ENCODE measurements at regions of chr1 and their contacts with region 1.

Region 1: GRCh38 chr1:178093205-178093957 is 523 bp upstream of the RASAL2 start:
- H3K4me3 Mint-ChIP-seq: peak overlapping the region; percentile 85
- H3K27ac Mint-ChIP-seq: peak overlapping the region; percentile 86
- H3K4me1 Mint-ChIP-seq: peaks cover 60% of the 10 kb centered on the region
- H3K27me3 Mint-ChIP-seq: no peaks in the 10 kb centered on the region

Region 2: DNA sequence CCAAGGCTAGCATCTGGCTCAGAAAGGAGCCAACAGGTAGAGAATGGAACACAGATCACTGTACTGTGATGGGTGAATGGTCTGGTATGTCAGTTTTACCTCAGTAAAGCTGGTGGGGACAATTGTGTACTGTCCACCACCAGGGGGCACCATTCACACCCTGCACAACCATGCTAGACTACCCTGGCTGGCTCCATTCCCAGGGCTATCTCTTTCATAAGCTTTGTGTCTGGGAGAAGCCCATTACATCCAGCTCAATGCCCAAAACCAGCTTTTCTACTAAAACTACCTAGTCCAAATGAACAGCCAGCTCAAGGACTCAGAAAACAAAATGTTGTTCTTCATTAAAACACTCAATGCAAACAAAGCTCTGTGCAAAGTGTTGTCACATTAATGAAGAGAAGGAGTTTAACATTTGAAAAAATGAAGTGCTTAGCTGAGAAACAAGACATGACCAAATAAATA is 61.5 kb before region 1 on chr1:
- intact Hi-C with region 1: loop called (anchors 5 kb)
- H3K4me3 Mint-ChIP-seq: no peak overlapping the region
- H3K27ac Mint-ChIP-seq: no peak overlapping the region
- H3K4me1 Mint-ChIP-seq: peaks cover 7% of the 10 kb centered on the region
- H3K27me3 Mint-ChIP-seq: no peaks in the 10 kb centered on the region

Region 3: GRCh38 chr1:178055779-178056471 is 37.5 kb before region 1 on chr1:
- intact Hi-C with region 1: loop called (anchors 2 kb)
- H3K4me3 Mint-ChIP-seq: peak overlapping the region; percentile 43
- H3K27ac Mint-ChIP-seq: peak overlapping the region; percentile 85
- H3K4me1 Mint-ChIP-seq: peaks cover 67% of the 10 kb centered on the region
- H3K27me3 Mint-ChIP-seq: peaks cover 2% of the 10 kb centered on the region

Region 4: DNA sequence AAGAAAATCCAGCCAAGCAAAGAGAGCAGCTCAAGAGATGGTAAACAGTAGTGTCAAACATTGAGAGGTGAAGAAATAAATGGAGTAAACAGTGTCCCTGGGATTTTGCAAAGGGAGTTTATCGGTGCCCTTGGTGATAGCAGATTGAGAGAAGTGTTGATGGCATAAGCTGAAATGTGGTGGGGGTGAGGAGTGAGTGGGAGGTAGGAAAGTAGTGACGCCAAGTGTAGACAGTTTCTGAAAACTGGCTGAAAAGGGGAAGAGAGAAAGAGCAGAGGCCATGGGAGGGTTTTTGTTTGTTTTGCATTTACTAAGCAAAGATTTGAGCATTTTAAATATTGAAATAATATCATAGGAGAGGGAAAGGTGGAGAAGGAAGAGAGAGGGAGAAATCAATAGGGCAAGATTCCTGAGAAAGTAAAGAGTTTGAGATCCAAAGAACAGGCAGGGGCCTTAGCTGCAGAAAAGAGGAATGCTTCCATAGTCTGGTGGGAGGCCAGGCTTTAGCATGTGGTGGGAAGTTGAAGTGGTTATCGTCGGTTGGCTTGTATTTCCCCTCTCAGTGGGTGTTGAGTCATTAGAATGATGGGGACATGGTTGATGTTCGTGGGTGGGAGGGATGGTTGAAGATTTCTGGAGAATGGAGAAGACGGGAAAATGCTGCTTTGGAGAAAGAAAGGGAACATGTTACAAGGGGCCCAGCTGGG is 26.3 kb before region 1 on chr1:
- intact Hi-C with region 1: loop called (anchors 1 kb)
- H3K4me3 Mint-ChIP-seq: peak overlapping the region; percentile 1
- H3K27ac Mint-ChIP-seq: peak overlapping the region; percentile 97
- H3K4me1 Mint-ChIP-seq: peaks cover 55% of the 10 kb centered on the region
- H3K27me3 Mint-ChIP-seq: no peaks in the 10 kb centered on the region

Region 5: GRCh38 chr1:178134061-178134460 is 40.7 kb after region 1 on chr1:
- intact Hi-C with region 1: loop called (anchors 5 kb)
- H3K4me3 Mint-ChIP-seq: no peak overlapping the region
- H3K27ac Mint-ChIP-seq: peak overlapping the region; percentile 80
- H3K4me1 Mint-ChIP-seq: peaks cover 40% of the 10 kb centered on the region
- H3K27me3 Mint-ChIP-seq: no peaks in the 10 kb centered on the region

Region 6: GRCh38 chr1:178189814-178190213 is 96.4 kb after region 1 on chr1:
- intact Hi-C with region 1: loop called (anchors 5 kb)
- H3K4me3 Mint-ChIP-seq: no peak overlapping the region
- H3K27ac Mint-ChIP-seq: no peak overlapping the region
- H3K4me1 Mint-ChIP-seq: peaks cover 54% of the 10 kb centered on the region
- H3K27me3 Mint-ChIP-seq: no peaks in the 10 kb centered on the region

Region 7: DNA sequence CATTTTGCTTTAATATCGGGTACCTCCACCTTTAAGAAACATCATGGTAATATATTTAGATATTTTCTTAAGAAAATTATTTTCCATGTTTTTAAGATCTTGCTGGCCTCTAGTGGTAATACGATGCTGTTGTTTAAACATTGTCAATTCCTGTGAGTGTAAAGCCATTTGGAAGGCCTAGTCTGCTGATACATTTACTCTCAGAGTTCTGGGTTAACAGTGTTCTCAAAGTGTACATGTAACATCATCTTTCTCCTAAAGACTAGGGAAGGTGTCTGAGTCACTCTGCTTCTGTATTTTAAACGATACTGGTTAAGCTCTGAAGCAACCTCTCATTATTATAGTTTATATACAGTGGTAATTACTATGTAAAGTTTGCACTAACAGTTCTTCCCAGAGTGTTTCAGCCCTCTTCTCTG is 189.6 kb after region 1 on chr1:
- intact Hi-C with region 1: loop called (anchors 5 kb)
- H3K4me3 Mint-ChIP-seq: no peak overlapping the region
- H3K27ac Mint-ChIP-seq: no peak overlapping the region
- H3K4me1 Mint-ChIP-seq: peaks cover 46% of the 10 kb centered on the region
- H3K27me3 Mint-ChIP-seq: no peaks in the 10 kb centered on the region

Measured in dendritic cell treated with granulocyte-macrophage colony-stimulating factor and Interleukin-4, amounts not matched to agents 40 ng/mL and 50 ng/mL, for 4 days (primary cell).